PC-3 (cell line): ENCODE measurements at regions of chr1 and their contacts with region 1.

Region 1: GRCh38 chr1:154335025-154335714 is 9.8 kb downstream of the ATP8B2 start:
- DNase-seq: peak; percentile 86
- ATAC-seq: peak; percentile 91
- H3K4me3 ChIP-seq: no peak overlapping the region
- H3K27ac ChIP-seq: no peak overlapping the region
- H3K4me1 ChIP-seq: 0 out of 2 replicates have a peak, but pooled peaks cover 3% of the 10 kb centered on the region
- H3K27me3 ChIP-seq: no peaks in the 10 kb centered on the region
- CTCF ChIP-seq: peak; percentile 97

Region 2: DNA sequence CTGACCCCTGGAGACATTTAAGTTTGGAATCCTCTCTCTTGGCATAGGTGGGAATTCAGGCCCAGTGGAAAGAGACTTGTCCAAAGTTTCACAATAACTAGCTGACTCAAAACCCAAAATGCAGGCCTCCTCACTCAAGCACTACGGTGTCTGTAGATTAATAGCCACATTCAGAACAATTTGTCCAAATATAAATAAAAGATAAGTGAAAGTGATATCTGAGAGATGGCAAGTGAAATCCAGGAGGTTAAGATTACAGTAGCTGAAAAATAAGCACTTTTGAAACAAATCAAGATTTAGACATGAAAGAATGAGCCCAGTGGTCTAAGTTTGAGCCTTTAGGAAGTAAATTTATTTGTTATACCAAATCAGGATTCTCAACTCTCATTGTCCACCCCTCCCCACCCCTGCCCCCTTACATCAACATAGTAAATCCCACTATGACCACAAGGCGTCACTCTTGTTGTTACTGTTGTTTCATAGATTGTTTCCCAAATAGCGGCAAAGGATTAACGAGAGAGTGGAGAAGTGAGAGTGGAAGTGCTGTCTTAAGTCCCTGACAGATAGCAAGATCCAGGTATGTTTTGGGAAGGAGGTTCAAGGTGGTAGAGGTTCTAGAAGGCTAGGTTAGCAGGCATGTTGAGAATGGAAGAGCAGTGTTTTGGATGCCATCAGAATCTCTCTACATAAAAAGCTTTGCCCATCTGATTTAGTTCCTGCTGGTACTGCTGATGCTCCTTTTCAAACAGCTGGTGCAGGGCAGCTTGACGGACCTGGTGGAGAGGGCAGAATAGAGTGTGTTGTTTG is 136.2 kb before region 1 on chr1:
- CTCF ChIA-PET with region 1: interaction called, 11 read pairs
- POLR2A ChIA-PET with region 1: no interaction called
- intact Hi-C with region 1: loop called (anchors 1 kb)
- DNase-seq: peak; percentile 84
- ATAC-seq: peak; percentile 84
- H3K4me3 ChIP-seq: peak overlapping the region; percentile 29; the same call in 1 of the 2 replicates
- H3K27ac ChIP-seq: no peak overlapping the region
- H3K4me1 ChIP-seq: peaks cover 10% of the 10 kb centered on the region; the same call in 1 of the 2 replicates
- H3K27me3 ChIP-seq: peaks cover 5% of the 10 kb centered on the region; the same call in 1 of the 2 replicates
- CTCF ChIP-seq: peak; percentile 84

Region 3: DNA sequence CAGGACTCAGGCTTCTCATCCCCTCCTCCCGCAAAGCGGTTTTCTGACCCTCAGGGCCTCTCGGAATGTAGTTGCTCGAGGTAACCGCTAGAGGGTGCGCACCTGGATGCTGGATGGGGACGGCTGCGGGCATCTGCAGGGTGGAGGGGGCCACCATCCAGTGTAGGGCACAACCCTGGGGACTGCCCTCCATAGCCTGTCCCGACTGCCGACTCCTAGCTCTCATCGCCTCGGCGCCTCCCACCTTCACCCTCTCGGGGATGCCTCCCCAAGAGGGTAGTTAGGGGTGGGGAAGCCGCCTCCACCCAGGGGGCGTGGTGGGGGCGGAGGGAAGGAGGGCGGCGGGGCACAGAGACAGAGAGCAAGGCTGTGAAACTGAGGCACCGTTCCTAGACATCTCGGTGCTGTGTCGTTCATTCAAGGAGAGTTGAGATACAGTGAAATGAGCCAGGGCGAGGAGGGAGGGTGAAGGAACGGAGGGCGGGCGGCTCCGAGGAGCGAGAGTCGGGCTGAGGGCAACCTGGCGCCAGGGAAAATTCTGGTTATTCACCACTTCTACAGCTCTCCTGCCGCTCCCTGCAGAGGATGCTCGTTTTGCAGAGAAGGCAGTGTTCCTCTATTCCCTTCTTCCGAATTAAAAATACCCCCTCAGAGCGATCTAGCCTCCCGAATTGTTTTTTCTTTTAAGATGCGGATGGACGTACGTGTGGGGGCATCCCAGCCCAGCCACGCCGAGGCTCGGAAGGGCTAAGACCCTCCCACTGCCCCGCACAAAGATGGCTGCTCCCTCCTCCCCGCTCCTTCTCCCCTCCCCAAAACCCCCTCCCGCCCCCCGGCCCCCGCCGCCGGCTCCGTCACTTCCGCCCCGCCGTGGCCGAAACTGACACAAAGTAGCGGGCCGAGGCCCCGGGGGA is 10.2 kb before region 1 on chr1 and contains the start of gene ATP8B2:
- CTCF ChIA-PET with region 1: interaction called, 18 read pairs
- POLR2A ChIA-PET with region 1: interaction called, 4 read pairs
- intact Hi-C with region 1: loop called (anchors 1 kb)
- DNase-seq: peak; percentile 92
- ATAC-seq: peak; percentile 40
- H3K4me3 ChIP-seq: peak within 1 kb of the TSS; percentile 79
- H3K27ac ChIP-seq: peak within 1 kb of the TSS; percentile 76
- H3K4me1 ChIP-seq: peaks cover 25% of the 10 kb centered on the region
- H3K27me3 ChIP-seq: peaks cover 14% of the 10 kb centered on the region; the same call in 1 of the 2 replicates
- CTCF ChIP-seq: peak; percentile 97
- total RNA-seq, gene ATP8B2: 25.7 and 36.3 TPM in 2 replicates

Region 4: DNA sequence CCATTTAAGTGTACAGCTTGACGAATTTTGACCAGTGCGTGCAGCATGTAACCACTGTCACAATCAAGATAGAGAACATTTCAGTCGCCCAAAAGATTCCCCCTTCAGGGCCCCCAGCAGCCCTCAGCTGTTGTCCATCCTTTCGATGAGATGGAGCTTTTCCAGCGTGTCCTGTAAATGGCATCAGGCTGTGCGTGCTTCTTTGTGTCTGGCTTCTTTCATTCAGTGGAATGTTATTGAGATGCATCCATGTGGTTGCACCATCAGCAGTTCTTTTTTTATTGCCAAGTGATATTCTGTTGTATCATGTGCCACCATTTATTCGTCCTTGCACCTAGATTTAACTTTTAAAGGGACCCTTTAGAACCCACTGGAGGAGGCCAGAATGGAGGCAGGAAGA is 201.4 kb after region 1 on chr1:
- CTCF ChIA-PET with region 1: no interaction called
- POLR2A ChIA-PET with region 1: no interaction called
- intact Hi-C with region 1: no loop called
- DNase-seq: no peak
- ATAC-seq: no peak
- H3K4me3 ChIP-seq: no peak overlapping the region
- H3K27ac ChIP-seq: no peak overlapping the region
- H3K4me1 ChIP-seq: no peaks in the 10 kb centered on the region
- H3K27me3 ChIP-seq: peaks cover 47% of the 10 kb centered on the region
- CTCF ChIP-seq: no peak